Activated CD8-positive, alpha-beta T cell treated with anti-CD3 and anti-CD28 coated beads, Interleukin-2, amount 10 ng/mL, durations not matched to agents 7 days and 5 days (primary cell): ENCODE measurements at regions of chr12 and their contacts with region 1.

Region 1: GRCh38 chr12:69070319-69071090 is 137.5 kb upstream of the CPM start:
- DNase-seq: peak; percentile 73
- ATAC-seq: peak; percentile 85
- H3K4me3 Mint-ChIP-seq: no peak overlapping the region
- H3K27ac Mint-ChIP-seq: no peak overlapping the region
- H3K4me1 Mint-ChIP-seq: no peaks in the 10 kb centered on the region
- H3K27me3 Mint-ChIP-seq: peaks cover 13% of the 10 kb centered on the region

Region 2: DNA sequence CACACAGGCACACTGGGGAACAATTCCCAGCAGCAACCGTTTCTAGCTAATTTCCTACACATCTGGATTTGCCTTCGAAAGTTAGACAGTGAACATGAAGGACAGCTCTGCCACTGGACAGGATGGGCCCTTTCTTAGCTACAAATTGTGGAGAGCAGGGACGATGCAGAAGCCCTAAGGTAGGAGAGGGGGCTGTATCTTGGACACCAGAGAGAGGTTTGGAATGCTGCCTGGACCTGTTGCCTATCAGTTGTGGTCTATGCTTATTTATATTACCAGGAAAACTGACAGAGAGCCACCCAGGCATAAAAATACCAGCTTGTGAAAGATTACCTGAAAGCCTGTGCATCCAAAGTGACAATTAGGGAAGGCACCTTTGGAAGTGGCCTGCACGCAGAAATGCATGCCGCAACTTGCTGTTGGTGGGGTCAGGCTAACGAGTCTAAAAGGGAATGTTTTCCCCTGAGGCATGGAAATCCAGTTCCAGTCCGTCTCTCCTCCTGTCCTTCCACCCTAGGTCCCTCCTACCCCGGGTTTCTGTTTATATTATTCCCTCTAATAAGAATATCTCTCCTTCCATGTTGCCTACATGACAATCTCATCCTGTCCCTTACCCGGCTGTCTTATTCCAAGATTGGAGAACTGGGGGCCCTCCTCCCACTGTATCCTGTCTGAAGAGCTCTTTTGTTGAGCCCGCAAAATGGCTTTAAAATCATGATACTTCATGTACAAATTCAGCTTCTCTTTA is 202.3 kb before region 1 on chr12:
- CTCF ChIA-PET with region 1: interaction called, 12 read pairs
- POLR2A ChIA-PET with region 1: no interaction called
- DNase-seq: no peak
- ATAC-seq: no peak
- H3K4me3 Mint-ChIP-seq: no peak overlapping the region
- H3K27ac Mint-ChIP-seq: no peak overlapping the region
- H3K4me1 Mint-ChIP-seq: no peaks in the 10 kb centered on the region
- H3K27me3 Mint-ChIP-seq: peaks cover 3% of the 10 kb centered on the region

Region 3: DNA sequence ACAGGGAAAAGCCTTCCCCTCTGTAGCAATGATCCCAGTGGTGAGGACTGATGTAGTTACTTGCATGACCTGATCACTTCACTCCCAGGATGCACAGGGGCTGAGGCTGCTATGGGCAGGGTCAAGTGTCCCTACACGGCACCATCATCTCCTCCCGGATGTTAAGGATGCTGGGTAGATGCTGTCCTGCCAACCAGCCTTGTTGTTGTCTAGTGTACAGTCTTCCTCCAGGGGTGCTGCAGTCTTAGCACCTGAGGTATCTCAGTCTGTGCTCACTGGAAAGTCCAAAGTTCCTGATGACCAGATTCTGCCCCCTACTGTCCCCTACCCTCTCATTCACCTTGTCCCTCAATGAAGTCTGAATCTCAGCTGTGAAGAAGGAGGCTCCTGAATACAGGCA is 157.6 kb before region 1 on chr12:
- CTCF ChIA-PET with region 1: no interaction called
- POLR2A ChIA-PET with region 1: no interaction called
- DNase-seq: no peak
- ATAC-seq: no peak
- H3K4me3 Mint-ChIP-seq: no peak overlapping the region
- H3K27ac Mint-ChIP-seq: no peak overlapping the region
- H3K4me1 Mint-ChIP-seq: no peaks in the 10 kb centered on the region
- H3K27me3 Mint-ChIP-seq: no peaks in the 10 kb centered on the region

Region 4: DNA sequence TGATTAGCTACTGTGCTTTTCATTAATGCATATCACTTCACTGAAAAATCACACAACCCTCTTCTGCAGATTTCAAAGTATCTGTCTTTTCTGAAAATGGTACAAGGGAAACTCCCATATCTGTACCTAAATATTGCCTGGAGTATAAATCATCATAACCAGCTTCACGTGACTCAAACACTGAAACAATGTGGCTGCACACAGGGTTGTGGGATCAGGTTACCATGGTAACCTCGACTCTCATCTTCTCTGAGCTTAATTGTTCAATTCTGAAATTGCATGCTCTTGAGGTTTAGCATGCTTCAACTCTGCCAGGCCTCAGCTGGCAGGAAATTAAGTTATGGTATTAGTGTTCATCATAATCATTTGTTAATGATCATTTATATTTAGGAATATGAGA is 91.3 kb after region 1 on chr12:
- CTCF ChIA-PET with region 1: no interaction called
- POLR2A ChIA-PET with region 1: no interaction called
- DNase-seq: peak; percentile 60
- ATAC-seq: peak; percentile 69
- H3K4me3 Mint-ChIP-seq: no peak overlapping the region
- H3K27ac Mint-ChIP-seq: no peak overlapping the region
- H3K4me1 Mint-ChIP-seq: peaks cover 21% of the 10 kb centered on the region
- H3K27me3 Mint-ChIP-seq: no peaks in the 10 kb centered on the region